AG04449 (cell line): ENCODE measurements at regions of chr11 and their contacts with region 1.

Region 1: GRCh38 chr11:34075178-34075820 is 23.8 kb downstream of the CAPRIN1 start:
- DNase-seq: no peak
- H3K4me3 ChIP-seq: no peak overlapping the region
- CTCF ChIP-seq: no peak

Region 2: DNA sequence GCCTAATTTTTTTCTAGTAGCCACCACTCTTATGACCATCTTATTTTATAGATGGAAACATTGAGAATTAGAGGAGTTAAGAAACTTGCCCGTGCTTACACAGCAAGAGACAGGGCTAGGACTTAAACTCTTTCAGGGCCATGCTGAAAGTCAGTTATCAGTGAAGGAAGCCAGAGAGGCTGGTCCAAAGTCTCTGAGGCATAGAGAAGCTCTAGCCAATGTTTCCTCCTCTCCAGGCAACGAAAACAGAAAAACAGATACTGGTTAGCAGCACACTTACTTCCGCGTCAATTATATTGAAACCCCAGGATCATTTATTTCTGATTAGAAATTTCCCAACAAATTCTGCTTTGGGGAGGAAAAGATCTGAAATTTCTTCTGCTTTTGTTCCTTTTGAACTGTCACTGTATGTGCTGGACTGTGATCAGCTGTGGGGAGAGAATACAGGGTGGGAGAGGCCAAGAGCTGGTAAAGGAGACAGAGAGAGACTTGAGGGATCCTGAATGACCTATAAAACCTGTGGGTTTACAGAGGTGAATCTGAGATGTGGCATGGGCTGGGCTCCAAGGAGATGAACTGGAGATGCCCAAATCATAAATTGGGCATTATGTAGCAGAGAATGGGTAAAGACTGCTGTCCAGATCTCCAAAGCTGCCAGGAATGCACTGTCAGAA is 61.3 kb before region 1 on chr11:
- CTCF ChIA-PET with region 1: no interaction called
- POLR2A ChIA-PET with region 1: no interaction called
- DNase-seq: no peak
- H3K4me3 ChIP-seq: no peak overlapping the region
- CTCF ChIP-seq: no peak

Region 3: DNA sequence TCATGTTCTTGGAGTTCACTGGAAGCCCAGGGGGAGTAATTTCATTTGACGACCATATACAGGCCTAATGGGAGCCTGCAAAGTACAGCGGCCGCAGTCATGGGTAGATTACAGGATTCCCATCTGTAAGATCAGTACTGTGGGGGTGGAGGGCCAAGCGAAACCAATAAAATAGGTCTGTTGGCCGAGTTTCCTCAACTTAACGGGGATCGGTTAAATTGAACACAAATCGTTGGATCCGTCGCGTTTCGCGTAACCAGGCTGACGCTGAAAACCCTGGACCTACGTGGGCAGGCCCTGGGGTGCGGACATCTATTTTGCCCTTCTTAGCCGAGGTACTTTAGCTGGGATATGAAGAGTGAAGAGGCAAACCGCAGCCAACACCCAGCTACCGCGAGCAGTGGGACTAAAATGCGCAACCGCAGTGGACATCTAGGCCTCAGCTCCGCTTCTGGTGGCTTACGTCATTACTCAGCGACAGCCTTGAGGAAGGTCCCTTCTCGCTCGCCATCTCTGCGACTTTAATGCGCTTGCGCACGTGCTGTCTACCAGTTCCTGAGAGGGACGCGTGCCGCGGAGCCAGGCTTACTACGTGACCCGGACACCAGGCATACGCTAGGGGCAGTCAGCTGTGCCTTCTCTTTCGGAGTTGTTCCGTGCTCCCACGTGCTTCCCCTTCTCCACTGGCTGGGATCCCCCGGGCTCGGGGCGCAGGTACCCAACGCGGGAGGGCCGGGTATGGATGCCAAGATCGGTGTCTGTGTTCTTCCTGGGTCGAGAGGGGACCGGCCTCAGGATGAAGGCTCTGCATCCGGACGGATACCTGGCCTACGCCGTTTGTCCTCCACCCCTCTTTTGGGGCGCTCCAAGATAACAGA is 30.0 kb after region 1 on chr11 and contains the start of gene NAT10:
- CTCF ChIA-PET with region 1: interaction called, 5 read pairs
- POLR2A ChIA-PET with region 1: interaction called, 10 read pairs
- DNase-seq: peak; percentile 94
- H3K4me3 ChIP-seq: peak within 1 kb of the TSS; percentile 90
- CTCF ChIP-seq: no peak